ENCODE measurements at regions of chrX and their contacts with region 1.

Region 1: DNA sequence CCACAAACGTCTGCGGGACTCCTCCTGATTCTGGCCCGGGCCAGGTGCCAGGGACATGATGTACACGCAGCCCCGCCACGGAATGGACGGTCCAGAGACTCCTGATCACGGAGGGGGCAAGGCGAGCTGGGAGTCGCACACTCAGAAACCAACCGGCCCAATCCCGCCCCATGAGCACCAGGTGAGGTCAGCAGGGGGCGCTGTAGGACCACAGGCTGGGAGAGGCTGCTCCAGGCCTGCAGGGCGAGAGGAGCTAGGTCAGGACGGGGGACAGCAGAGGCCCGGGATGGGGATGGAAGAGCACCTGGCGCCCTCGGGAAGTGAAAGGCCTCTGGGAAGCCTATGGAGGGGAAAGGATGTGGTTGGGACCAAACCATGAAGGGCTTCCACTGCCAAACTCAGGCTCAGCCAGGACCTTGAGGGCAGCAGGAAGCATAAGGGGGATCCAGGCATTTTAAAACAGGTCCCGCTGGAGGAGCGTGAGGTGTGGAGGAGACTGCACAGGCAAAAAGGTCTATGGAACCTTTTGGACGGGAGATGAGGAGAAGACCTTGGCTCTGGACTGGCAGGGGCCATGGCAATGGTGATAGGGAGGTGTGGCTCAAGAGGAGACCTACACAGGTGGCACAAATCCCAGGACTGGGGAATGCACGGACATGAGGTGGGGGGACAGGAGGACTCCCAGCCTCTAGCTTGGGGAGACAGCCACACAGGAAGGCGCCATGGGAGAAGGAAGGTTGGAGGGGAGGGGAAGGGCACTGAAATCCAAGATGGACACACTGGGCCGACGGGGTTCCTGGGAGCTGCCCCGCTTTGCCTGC is 79.2 kb downstream of the MTMR1 start:
- DNase-seq: peak; percentile 89
- ATAC-seq: peak; percentile 82

Region 2: DNA sequence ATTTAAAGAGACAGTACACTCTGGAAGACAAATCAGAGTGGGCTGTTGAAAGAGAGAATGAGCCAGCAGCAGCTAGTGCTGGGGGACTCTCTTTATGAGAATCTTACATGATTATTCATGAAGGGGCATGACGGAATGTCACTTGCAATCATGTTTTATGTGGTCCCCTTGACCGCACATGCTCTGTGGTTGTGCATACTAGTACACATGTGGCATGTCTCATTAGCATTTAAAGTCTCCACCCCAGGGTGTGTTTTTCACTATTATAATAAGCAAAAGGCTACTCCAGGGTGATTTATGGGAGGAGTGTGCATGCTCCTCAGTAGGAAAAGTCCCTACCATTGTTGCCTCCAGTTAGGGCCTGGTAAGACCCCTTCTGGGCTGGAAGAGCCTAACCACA is 1091.2 kb before region 1 on chrX:
- intact Hi-C with region 1: no loop called
- DNase-seq: no peak
- ATAC-seq: no peak

Region 3: DNA sequence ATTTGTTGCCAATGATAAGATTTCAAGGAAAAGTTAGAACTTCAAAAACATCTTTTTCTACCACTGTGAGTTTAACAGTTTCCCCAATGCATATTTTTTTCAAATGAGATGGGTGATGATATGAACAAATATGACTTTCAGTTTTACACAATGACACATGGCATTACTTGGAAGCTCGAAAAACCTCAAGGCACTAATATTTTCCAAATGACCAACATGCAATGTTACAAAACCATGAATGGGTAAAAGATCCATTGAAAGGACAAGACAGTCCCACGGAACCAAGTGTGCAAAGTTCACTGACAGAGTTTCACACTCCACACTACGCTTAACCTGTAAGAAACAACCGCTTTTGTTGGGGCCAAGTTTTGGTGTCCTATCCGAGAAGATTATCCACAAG is 41.6 kb after region 1 on chrX:
- intact Hi-C with region 1: no loop called
- DNase-seq: no peak
- ATAC-seq: no peak

Region 4: GRCh38 chrX:151082076-151082948 is 310.0 kb after region 1 on chrX:
- intact Hi-C with region 1: loop called (anchors 5 kb)
- DNase-seq: peak; percentile 80
- ATAC-seq: peak; percentile 89

Measured in sciatic nerve (tissue), 2 donors.